HCT116 (cell line): ENCODE measurements at regions of chr12 and their contacts with region 1.

Region 1: GRCh38 chr12:127381048-127381668 is 885.8 kb upstream of the TMEM132C start:
- DNase-seq: peak; percentile 21
- ATAC-seq: peak; percentile 99
- H3K4me3 ChIP-seq: no peak overlapping the region
- H3K27ac ChIP-seq: no peak overlapping the region
- H3K4me1 ChIP-seq: no peaks in the 10 kb centered on the region
- H3K27me3 ChIP-seq: no peaks in the 10 kb centered on the region
- CTCF ChIP-seq: peak; percentile 74 to 93 (median 92)
- POLR2A ChIP-seq: no peak
- RAD21 ChIP-seq: peak; percentile 89

Region 2: DNA sequence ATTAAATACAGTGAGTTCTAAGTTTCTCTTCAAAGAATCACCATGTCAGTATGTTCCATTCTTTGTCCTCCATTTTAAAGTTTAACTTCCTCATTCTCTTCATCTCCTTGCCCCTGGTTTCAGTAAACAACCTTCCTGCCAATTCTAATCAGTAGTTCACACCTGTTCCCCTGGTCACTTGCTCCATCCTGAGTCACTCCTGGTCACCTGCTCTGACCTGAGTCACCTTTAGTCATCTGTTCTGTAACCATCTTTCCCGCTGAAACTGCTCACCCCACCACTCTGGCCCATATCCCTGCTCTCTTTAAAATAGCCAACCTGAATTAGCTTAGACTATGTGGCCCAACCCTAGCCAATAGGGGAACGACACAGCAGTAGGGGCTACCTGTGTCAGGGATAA is 561.6 kb before region 1 on chr12:
- CTCF ChIA-PET with region 1: no interaction called
- POLR2A ChIA-PET with region 1: no interaction called
- RAD21 ChIA-PET with region 1: no interaction called
- intact Hi-C with region 1: no loop called
- DNase-seq: no peak
- ATAC-seq: no peak
- H3K4me3 ChIP-seq: no peak overlapping the region
- H3K27ac ChIP-seq: no peak overlapping the region
- H3K4me1 ChIP-seq: no peaks in the 10 kb centered on the region
- H3K27me3 ChIP-seq: no peaks in the 10 kb centered on the region
- CTCF ChIP-seq: no peak
- POLR2A ChIP-seq: no peak
- RAD21 ChIP-seq: no peak

Region 3: DNA sequence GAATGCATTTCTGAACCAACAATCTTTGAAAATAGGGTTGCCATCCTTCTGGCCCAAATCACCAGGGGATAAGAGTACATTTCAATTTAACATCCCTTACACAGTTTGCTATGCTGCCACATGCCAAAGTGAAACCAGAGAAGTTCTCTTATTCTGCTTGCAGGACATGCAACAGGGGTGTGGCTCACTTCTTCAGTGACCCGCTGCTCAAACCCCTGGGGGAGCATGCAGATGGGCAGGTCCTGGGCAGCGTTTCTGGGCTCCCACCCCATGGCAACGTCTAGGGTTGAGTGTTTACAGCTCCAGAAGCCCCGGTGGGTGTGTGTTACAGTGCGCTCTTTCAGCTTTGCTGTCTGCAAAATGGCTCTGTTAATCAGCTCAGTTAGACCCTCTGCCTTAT is 420.4 kb before region 1 on chr12:
- CTCF ChIA-PET with region 1: no interaction called
- POLR2A ChIA-PET with region 1: no interaction called
- RAD21 ChIA-PET with region 1: no interaction called
- intact Hi-C with region 1: no loop called
- DNase-seq: no peak
- ATAC-seq: no peak
- H3K4me3 ChIP-seq: no peak overlapping the region
- H3K27ac ChIP-seq: no peak overlapping the region
- H3K4me1 ChIP-seq: no peaks in the 10 kb centered on the region
- H3K27me3 ChIP-seq: no peaks in the 10 kb centered on the region
- CTCF ChIP-seq: no peak
- POLR2A ChIP-seq: no peak
- RAD21 ChIP-seq: no peak

Region 4: DNA sequence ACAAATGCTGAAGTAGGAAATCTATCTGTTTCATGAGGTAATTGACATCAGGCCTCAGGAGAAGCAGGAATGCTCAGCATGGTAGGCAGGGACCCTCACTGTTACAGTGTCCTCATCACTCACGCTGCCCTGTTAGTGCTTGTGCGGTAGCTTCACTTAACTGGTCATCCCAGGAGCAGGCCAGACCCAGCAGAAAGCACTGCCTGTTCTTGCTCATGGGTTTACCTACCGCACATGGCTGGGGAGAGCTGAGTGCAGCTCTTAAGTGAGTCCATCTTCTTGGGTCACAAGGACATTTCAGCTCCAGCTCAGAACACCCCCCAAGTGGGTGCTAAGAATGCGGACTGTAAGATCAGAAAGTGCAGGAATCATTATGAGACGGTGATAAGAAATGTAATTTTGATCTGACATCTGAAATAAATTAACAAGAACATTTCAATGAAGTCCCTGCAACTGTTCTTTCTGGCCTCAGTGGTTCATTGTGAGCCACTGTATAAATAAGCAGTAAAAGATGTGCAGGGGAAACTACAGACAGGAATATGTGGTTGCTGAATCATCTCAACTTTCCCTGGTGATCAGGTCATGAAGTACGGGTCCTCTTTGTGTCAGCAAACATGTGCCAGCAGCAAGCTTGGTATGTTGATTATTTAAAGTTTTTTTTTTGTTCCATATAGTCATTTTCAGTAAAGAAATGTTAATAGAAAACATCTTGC is 128.1 kb after region 1 on chr12:
- CTCF ChIA-PET with region 1: no interaction called
- POLR2A ChIA-PET with region 1: no interaction called
- RAD21 ChIA-PET with region 1: no interaction called
- intact Hi-C with region 1: no loop called
- DNase-seq: no peak
- ATAC-seq: no peak
- H3K4me3 ChIP-seq: no peak overlapping the region
- H3K27ac ChIP-seq: no peak overlapping the region
- H3K4me1 ChIP-seq: no peaks in the 10 kb centered on the region
- H3K27me3 ChIP-seq: no peaks in the 10 kb centered on the region
- CTCF ChIP-seq: no peak
- POLR2A ChIP-seq: no peak
- RAD21 ChIP-seq: no peak

Region 5: GRCh38 chr12:128069359-128069997 is 688.3 kb after region 1 on chr12:
- CTCF ChIA-PET with region 1: no interaction called
- POLR2A ChIA-PET with region 1: no interaction called
- RAD21 ChIA-PET with region 1: no interaction called
- intact Hi-C with region 1: loop called (anchors 2 kb)
- DNase-seq: peak; percentile 26
- ATAC-seq: 0 out of 2 replicates have a peak, but pooled peaks have one; percentile 54
- H3K4me3 ChIP-seq: no peak overlapping the region
- H3K27ac ChIP-seq: no peak overlapping the region
- H3K4me1 ChIP-seq: no peaks in the 10 kb centered on the region
- H3K27me3 ChIP-seq: no peaks in the 10 kb centered on the region
- CTCF ChIP-seq: peak; percentile 24 to 74 (median 59); a peak in 5 of 6 replicates
- POLR2A ChIP-seq: no peak
- RAD21 ChIP-seq: peak; percentile 58